ENCODE measurements at regions of chr6 and their contacts with region 1.

Region 1: DNA sequence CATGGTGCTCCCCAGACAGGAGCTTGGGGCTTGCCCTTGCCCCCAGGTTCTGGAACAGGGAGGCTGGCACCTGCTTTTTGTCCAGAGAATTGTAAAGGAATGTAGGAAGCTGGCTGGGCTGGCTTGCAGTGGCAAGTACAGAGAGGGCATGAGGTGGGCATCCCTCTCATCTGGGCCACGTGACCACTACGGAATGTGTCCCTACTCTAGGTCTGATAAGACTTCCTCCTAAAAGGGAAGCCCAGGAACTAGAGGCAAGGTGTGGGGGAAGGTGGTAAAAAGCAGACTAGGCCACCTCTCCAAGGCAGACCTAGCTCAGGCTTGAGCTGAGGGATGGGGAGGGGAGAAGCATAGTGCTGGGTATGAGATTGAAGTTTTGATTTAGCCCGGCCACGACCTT is 38.8 kb downstream of the UNC5CL start:
- DNase-seq: no peak
- ATAC-seq: no peak
- H3K4me3 ChIP-seq: no peak overlapping the region
- H3K27ac ChIP-seq: no peak overlapping the region
- H3K4me1 ChIP-seq: peaks cover 0 to 29% (median 9%) of the 10 kb centered on the region in 4 donors
- H3K27me3 ChIP-seq: no peaks in the 10 kb centered on the region
- CTCF ChIP-seq: no peak
- POLR2A ChIP-seq: no peak

Region 2: DNA sequence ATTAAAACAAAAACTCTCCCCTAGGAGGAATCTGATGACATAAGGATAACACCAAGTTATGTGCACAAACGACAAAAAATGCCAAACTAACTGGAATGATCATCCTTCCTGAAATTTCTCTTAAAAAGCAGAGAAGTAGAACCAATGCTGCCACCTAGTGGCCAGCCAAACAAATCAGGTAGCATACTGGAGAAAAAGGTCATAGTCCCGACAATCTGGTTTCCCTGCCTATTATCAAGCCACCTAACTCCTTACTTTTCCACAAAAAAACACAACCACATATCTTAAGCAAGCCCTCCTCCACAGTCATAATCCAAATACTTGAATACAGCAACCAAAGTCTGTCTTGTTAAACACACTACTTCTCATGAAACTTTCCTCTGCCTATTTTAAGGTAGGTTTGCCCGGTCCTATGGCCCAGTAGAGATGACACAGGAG is 66.6 kb after region 1 on chr6:
- intact Hi-C with region 1: loop called in 1 of 2 experiments (anchors 10 kb)
- DNase-seq: peak; percentile 72 to 79 (median 72)
- ATAC-seq: peak; percentile 45 to 64 (median 53)
- H3K4me3 ChIP-seq: no peak overlapping the region
- H3K27ac ChIP-seq: peak overlapping the region in 2 of 3 donors; percentile 57 to 63
- H3K4me1 ChIP-seq: peaks cover 0 to 50% (median 13%) of the 10 kb centered on the region in 4 donors
- H3K27me3 ChIP-seq: no peaks in the 10 kb centered on the region
- CTCF ChIP-seq: peak; percentile 89 to 93 (median 90)
- POLR2A ChIP-seq: no peak